ENCODE measurements at regions of chr1 and their contacts with region 1.

Region 1: GRCh38 chr1:38873027-38873969 is at the start of gene MYCBP:
- DNase-seq: peak; percentile 97
- ATAC-seq: peak; percentile 99
- H3K4me3 Mint-ChIP-seq: peak within 1 kb of the TSS; percentile 92
- H3K27ac Mint-ChIP-seq: peak within 1 kb of the TSS; percentile 83
- H3K4me1 Mint-ChIP-seq: peaks cover 23% of the 10 kb centered on the region
- H3K27me3 Mint-ChIP-seq: no peaks in the 10 kb centered on the region
- CTCF ChIP-seq: no peak
- total RNA-seq, gene MYCBP: 18.6 and 19.2 TPM in 2 replicates

Region 2: DNA sequence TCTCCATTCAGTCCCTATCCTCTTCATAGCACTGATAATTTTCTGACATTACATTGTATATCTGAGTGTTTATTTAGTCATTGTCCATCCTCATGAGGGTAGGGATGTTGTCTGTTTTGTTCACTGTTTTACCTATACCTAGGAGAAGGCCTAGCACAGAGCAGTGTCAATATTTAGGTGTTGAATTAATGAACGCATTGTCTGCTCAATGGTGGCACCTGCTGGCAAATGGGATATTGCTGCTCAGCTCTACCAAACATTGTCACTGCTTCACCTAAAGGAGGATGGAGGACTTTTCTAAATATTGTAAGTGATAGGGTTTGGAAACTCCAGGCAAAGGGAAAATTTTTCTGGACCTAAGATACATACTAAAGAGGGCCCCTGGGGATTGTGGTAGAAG is 257.6 kb before region 1 on chr1:
- CTCF ChIA-PET with region 1: no interaction called
- POLR2A ChIA-PET with region 1: no interaction called
- intact Hi-C with region 1: no loop called
- DNase-seq: no peak
- ATAC-seq: no peak
- H3K4me3 Mint-ChIP-seq: no peak overlapping the region
- H3K27ac Mint-ChIP-seq: no peak overlapping the region
- H3K4me1 Mint-ChIP-seq: no peaks in the 10 kb centered on the region
- H3K27me3 Mint-ChIP-seq: peaks cover 21% of the 10 kb centered on the region
- CTCF ChIP-seq: no peak

Region 3: GRCh38 chr1:38815903-38816627 is 57.2 kb before region 1 on chr1:
- CTCF ChIA-PET with region 1: no interaction called
- POLR2A ChIA-PET with region 1: no interaction called
- intact Hi-C with region 1: no loop called
- DNase-seq: no peak
- ATAC-seq: peak; percentile 28
- H3K4me3 Mint-ChIP-seq: peak overlapping the region; percentile 15
- H3K27ac Mint-ChIP-seq: no peak overlapping the region
- H3K4me1 Mint-ChIP-seq: peaks cover 21% of the 10 kb centered on the region
- H3K27me3 Mint-ChIP-seq: peaks cover 69% of the 10 kb centered on the region
- CTCF ChIP-seq: no peak

Region 4: GRCh38 chr1:38973659-38974424 is 100.5 kb after region 1 on chr1:
- CTCF ChIA-PET with region 1: no interaction called
- POLR2A ChIA-PET with region 1: interaction called, 11 read pairs
- intact Hi-C with region 1: no loop called
- DNase-seq: no peak
- ATAC-seq: no peak
- H3K4me3 Mint-ChIP-seq: no peak overlapping the region
- H3K27ac Mint-ChIP-seq: no peak overlapping the region
- H3K4me1 Mint-ChIP-seq: no peaks in the 10 kb centered on the region
- H3K27me3 Mint-ChIP-seq: no peaks in the 10 kb centered on the region
- CTCF ChIP-seq: no peak